CD4-positive, alpha-beta memory T cell (primary cell): ENCODE measurements at regions of chr5 and their contacts with region 1.

Region 1: GRCh38 chr5:56565644-56566043 is 249.7 kb upstream of the MAP3K1 start:
- DNase-seq: no peak
- H3K4me3 ChIP-seq: no peak overlapping the region
- H3K4me3 Mint-ChIP-seq: peak overlapping the region in 1 of 8 donors; percentile 4
- H3K27ac ChIP-seq: no peak overlapping the region
- H3K27ac Mint-ChIP-seq: no peak overlapping the region
- H3K4me1 ChIP-seq: peaks cover 11% of the 10 kb centered on the region
- H3K4me1 Mint-ChIP-seq: peaks cover 12 to 17% (median 15%) of the 10 kb centered on the region in 4 donors
- H3K27me3 ChIP-seq: no peaks in the 10 kb centered on the region
- H3K27me3 Mint-ChIP-seq: no peaks in the 10 kb centered on the region

Region 2: DNA sequence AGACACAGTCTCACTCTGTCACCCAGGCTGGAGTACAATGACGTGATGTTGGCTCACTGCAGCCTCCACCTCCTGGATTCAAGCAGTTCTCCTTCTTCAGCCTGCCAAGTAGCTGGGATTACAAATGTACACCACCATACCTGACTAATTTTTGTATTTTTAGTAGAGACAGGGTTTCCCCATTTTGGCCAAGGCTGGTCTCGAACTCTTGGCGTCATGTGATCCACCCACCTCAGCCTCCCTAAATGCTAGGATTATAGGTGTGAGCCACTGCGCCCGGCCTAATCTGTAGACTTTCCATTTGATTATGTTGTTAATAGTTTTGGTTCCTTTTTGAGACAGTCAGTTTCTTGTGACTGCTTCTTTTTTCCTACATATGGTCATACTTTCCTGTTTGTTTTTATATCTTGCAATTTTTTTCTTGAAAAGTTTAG is 1226.8 kb before region 1 on chr5:
- CTCF ChIA-PET with region 1: no interaction called
- POLR2A ChIA-PET with region 1: no interaction called
- intact Hi-C with region 1: loop called (anchors 10 kb)
- DNase-seq: no peak
- H3K4me3 ChIP-seq: no peak overlapping the region
- H3K4me3 Mint-ChIP-seq: peak overlapping the region in 3 of 8 donors; percentile 10 to 73 (median 36)
- H3K27ac ChIP-seq: no peak overlapping the region
- H3K27ac Mint-ChIP-seq: peak overlapping the region in 3 of 7 donors; percentile 26 to 66 (median 52)
- H3K4me1 ChIP-seq: peaks cover 25% of the 10 kb centered on the region
- H3K4me1 Mint-ChIP-seq: peaks cover 20 to 29% (median 24%) of the 10 kb centered on the region in 4 donors
- H3K27me3 ChIP-seq: no peaks in the 10 kb centered on the region
- H3K27me3 Mint-ChIP-seq: no peaks in the 10 kb centered on the region

Region 3: GRCh38 chr5:56631719-56632118 is 66.1 kb after region 1 on chr5:
- CTCF ChIA-PET with region 1: no interaction called
- POLR2A ChIA-PET with region 1: no interaction called
- intact Hi-C with region 1: no loop called
- DNase-seq: no peak
- H3K4me3 ChIP-seq: no peak overlapping the region
- H3K4me3 Mint-ChIP-seq: no peak overlapping the region
- H3K27ac ChIP-seq: no peak overlapping the region
- H3K27ac Mint-ChIP-seq: no peak overlapping the region
- H3K4me1 ChIP-seq: no peaks in the 10 kb centered on the region
- H3K4me1 Mint-ChIP-seq: peaks cover 1 to 5% (median 3%) of the 10 kb centered on the region in 4 donors
- H3K27me3 ChIP-seq: no peaks in the 10 kb centered on the region
- H3K27me3 Mint-ChIP-seq: no peaks in the 10 kb centered on the region

Region 4: DNA sequence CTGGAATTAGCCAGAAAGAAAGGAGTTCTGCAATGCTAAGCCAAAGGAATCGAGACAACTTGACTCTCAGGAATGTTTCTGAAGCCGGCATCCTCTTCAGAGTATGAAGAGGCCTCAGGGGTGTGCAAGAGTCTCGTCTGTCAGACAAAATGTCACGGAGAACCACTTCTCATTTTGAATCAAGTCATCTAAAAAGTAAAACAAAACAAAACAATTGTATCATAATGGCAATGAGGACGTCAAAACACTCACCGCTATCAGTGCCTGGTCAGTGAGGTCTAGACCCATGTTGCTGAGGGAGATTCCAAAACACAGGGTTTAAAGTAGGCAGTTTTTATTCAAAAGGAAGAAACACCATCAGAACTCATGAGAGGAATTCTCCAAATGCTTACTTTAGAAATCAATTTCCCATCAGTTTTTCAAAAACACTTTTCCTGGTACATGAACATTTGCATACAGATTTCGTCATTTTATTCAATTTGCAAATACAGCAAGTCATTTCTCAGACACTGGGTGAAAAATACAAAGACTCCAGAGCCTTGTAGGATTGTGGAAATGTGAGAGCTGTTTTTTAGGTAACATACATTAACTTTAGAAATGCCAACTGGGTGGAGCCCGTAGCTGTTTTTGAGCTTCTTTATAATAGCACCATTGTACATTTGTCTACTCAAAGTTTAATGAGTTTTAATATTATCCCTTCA is 160.2 kb after region 1 on chr5:
- CTCF ChIA-PET with region 1: no interaction called
- POLR2A ChIA-PET with region 1: no interaction called
- intact Hi-C with region 1: no loop called
- DNase-seq: no peak
- H3K4me3 ChIP-seq: no peak overlapping the region
- H3K4me3 Mint-ChIP-seq: peak overlapping the region in 1 of 8 donors; percentile 31
- H3K27ac ChIP-seq: no peak overlapping the region
- H3K27ac Mint-ChIP-seq: no peak overlapping the region
- H3K4me1 ChIP-seq: no peaks in the 10 kb centered on the region
- H3K4me1 Mint-ChIP-seq: peaks cover 3 to 15% (median 5%) of the 10 kb centered on the region in 4 donors
- H3K27me3 ChIP-seq: no peaks in the 10 kb centered on the region
- H3K27me3 Mint-ChIP-seq: no peaks in the 10 kb centered on the region